ENCODE measurements at regions of chr5 and their contacts with region 1.

Region 1: GRCh38 chr5:155091063-155091648 is 77.6 kb downstream of the KIF4B start:
- DNase-seq: no peak
- ATAC-seq: peak; percentile 80

Region 2: GRCh38 chr5:154972476-154973080 is 118.6 kb before region 1 on chr5:
- intact Hi-C with region 1: loop called (anchors 2 kb)
- DNase-seq: no peak
- ATAC-seq: peak; percentile 52

Region 3: DNA sequence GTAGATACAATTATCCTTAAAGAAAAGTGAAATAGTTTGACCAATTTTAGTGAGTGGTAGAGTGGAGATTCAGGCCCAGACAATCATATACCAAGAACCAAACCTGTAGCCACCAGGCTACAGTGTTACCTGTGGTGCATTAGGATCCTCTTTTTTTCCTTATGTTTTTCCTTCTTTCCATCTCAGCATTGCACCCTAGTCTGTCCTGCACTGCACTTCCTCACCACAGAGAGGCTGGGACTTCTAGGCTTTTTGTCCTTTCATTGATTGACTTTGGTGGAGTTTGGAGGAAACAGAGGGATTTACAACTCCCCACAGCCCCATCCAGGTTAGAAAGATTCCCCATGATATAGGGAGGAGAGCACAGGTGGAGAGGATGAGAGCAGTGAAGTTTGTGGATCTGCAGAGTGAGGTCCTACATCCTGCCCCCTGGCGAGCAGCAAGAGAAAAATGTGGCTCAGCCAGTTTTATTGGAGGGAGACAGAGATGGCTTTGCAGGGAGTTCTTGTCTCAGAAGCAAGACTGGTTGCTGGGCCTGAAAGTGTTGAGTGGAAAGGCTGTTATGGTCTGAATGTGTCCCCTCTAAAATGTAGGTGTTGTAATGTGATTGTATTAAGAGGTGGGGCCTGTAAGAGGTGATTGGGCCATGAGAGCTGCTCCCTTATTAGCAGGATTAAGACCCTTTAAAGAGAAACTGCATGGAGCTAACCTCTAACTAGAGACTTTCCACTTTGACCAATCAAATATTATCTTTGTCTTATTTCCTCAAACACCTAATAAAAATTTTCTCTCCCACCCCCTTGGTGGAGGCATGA is 41.4 kb before region 1 on chr5:
- intact Hi-C with region 1: loop called (anchors 5 kb)
- DNase-seq: no peak
- ATAC-seq: no peak

Region 4: DNA sequence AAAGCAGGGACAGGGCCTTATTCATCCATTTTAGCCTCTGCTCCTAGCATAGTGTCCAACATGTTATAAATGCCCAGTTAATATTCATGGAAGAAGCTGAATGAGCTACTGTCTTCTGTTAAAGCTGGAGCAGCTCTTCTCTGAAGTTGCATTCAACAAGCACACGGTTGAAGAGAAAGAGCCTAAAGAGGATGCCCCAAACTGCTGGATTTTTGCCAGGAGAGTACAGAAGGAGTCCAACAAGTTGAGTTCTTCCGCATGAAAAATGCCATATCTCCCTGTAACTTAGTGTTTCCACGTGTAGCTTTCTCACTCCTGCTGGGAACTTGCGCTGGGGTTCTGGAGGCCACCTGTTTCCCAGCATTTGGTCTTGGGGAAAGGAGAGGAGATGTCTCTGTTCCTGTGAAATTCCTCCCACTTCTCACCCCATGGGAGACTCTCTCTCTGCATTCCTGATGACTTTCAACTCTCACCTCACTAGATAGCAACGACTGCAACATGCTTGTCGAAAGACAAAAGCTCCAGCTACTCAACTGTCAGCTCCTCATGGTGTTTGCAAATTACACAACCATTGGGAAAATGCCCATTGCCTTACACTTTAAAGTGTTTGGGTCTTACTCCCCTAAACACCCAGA is 45.2 kb after region 1 on chr5:
- intact Hi-C with region 1: loop called (anchors 2 kb)
- DNase-seq: no peak
- ATAC-seq: peak; percentile 75

Region 5: DNA sequence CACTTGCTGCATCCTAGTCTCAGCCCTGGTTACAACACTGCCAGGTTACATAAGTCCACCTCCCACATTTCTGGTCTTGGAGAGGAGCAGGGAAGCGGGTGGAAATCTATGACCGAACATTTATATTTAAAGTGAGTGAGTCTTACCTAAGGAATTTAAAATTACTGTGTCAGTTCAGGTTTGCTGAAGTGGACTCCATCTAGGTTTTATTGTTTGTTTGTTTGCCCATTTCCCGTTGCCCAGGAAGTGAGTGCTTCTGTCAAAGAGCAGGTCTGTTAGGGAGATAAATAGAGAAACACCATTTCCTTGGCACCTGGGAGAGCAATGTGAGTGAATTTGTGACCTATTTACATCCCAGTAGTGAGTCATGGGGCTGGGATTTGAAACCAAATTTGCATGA is 101.9 kb after region 1 on chr5:
- intact Hi-C with region 1: loop called (anchors 1 kb)
- DNase-seq: no peak
- ATAC-seq: peak; percentile 85

Region 6: DNA sequence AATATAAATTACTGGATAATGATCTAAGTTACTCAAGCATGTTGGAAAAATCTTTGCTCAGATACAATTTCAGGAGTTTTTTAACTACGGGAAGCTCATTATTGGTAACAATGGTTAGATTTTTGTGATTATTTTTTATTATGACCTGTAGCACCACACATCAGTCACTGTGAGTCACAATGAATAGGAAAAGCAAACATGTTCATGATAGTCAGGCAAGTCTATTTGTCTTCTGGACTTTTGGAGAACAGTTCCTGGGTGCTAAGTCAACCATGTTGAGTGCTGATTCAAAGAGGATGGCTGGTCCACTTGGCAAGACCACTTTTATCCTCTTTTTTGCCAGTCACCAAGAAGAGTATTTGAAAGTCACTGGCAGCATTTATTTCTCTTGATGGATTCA is 325.6 kb after region 1 on chr5:
- intact Hi-C with region 1: no loop called
- DNase-seq: no peak
- ATAC-seq: no peak

Region 7: GRCh38 chr5:155485386-155485785 is 394.2 kb after region 1 on chr5:
- intact Hi-C with region 1: loop called (anchors 5 kb)
- DNase-seq: no peak
- ATAC-seq: no peak

Region 8: DNA sequence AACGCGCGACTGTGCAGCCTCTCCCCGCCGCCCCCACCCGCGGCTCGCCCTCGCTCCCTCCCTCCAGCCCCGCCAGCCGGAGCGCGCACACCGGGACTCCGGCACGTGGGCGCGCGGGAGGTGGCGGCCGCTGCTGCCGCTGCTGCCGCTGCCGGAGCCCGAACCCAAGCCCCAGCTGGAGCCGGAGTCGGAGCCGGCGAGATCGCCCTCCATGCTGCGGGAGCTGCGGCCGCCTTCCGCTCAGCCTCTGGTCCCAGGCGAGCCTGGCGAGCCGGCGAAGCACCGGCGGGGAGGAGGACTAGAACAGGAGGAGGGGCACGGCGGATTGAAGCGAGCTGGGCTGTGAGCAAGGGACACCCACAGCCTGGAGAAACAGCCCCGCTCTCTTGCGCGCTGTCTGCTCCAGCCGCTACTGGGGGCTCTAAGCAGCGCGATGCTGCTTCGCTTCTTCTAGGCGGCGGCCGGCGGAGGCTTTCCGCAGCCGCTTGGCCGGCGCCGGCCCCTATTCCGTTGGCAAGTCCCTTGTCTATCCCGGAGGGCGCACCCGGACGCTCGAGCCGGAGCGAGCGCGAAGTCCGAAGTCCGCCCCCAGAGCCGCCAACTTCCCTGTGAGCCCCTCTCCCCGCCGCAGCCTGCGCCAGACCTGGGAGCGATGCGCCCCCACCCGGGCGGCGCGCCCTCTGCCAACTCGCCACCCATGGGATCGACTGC is 637.1 kb after region 1 on chr5:
- intact Hi-C with region 1: loop called (anchors 2 kb)
- DNase-seq: peak; percentile 78
- ATAC-seq: peak; percentile 69

Measured in Right ventricle myocardium inferior (tissue), 1 donor.